ENCODE measurements at regions of chr9 and their contacts with region 1.

Region 1: GRCh38 chr9:94065535-94065961 is 18.7 kb upstream of the PTPDC1 start:
- DNase-seq: peak; percentile 84
- ATAC-seq: peak; percentile 75
- H3K4me3 Mint-ChIP-seq: no peak overlapping the region
- H3K27ac Mint-ChIP-seq: no peak overlapping the region
- H3K4me1 Mint-ChIP-seq: peaks cover 4% of the 10 kb centered on the region
- H3K27me3 Mint-ChIP-seq: no peaks in the 10 kb centered on the region

Region 2: GRCh38 chr9:94002316-94003140 is 63.0 kb before region 1 on chr9:
- CTCF ChIA-PET with region 1: interaction called, 11 read pairs
- POLR2A ChIA-PET with region 1: no interaction called
- intact Hi-C with region 1: no loop called
- DNase-seq: peak; percentile 57
- ATAC-seq: peak; percentile 57
- H3K4me3 Mint-ChIP-seq: no peak overlapping the region
- H3K27ac Mint-ChIP-seq: no peak overlapping the region
- H3K4me1 Mint-ChIP-seq: no peaks in the 10 kb centered on the region
- H3K27me3 Mint-ChIP-seq: peaks cover 6% of the 10 kb centered on the region

Region 3: GRCh38 chr9:94014065-94014654 is 51.4 kb before region 1 on chr9:
- CTCF ChIA-PET with region 1: interaction called, 10 read pairs
- POLR2A ChIA-PET with region 1: no interaction called
- intact Hi-C with region 1: no loop called
- DNase-seq: no peak
- ATAC-seq: no peak
- H3K4me3 Mint-ChIP-seq: no peak overlapping the region
- H3K27ac Mint-ChIP-seq: no peak overlapping the region
- H3K4me1 Mint-ChIP-seq: peaks cover 18% of the 10 kb centered on the region
- H3K27me3 Mint-ChIP-seq: no peaks in the 10 kb centered on the region

Region 4: GRCh38 chr9:94076557-94076956 is 11.0 kb after region 1 on chr9:
- CTCF ChIA-PET with region 1: interaction called, 11 read pairs
- POLR2A ChIA-PET with region 1: no interaction called
- intact Hi-C with region 1: no loop called
- DNase-seq: no peak
- ATAC-seq: no peak
- H3K4me3 Mint-ChIP-seq: no peak overlapping the region
- H3K27ac Mint-ChIP-seq: no peak overlapping the region
- H3K4me1 Mint-ChIP-seq: peaks cover 1% of the 10 kb centered on the region
- H3K27me3 Mint-ChIP-seq: no peaks in the 10 kb centered on the region

Region 5: GRCh38 chr9:94188246-94188645 is 122.7 kb after region 1 on chr9:
- CTCF ChIA-PET with region 1: no interaction called
- POLR2A ChIA-PET with region 1: no interaction called
- intact Hi-C with region 1: no loop called
- DNase-seq: no peak
- ATAC-seq: no peak
- H3K4me3 Mint-ChIP-seq: no peak overlapping the region
- H3K27ac Mint-ChIP-seq: no peak overlapping the region
- H3K4me1 Mint-ChIP-seq: peaks cover 7% of the 10 kb centered on the region
- H3K27me3 Mint-ChIP-seq: no peaks in the 10 kb centered on the region

Region 6: DNA sequence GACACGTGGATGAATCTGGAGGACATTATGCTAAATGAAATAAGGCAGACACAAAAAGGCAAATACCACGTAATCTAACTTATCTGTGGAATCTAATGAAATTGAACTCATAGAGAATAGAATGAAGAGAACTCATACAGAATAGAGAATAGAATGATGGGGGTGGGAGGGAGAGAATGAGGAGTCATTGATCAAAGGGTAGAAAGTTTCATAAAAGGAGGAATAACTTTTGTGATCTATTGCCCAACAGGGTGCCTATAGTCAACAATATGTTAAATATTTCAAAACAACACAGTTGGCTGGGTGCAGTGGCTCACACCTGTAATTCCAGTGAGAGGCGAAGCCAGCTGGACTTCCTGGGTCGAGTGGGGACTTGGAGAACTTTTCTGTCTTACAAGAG is 138.6 kb after region 1 on chr9:
- CTCF ChIA-PET with region 1: interaction called, 175 read pairs
- POLR2A ChIA-PET with region 1: no interaction called
- intact Hi-C with region 1: no loop called
- DNase-seq: no peak
- ATAC-seq: no peak
- H3K4me3 Mint-ChIP-seq: no peak overlapping the region
- H3K27ac Mint-ChIP-seq: no peak overlapping the region
- H3K4me1 Mint-ChIP-seq: no peaks in the 10 kb centered on the region
- H3K27me3 Mint-ChIP-seq: peaks cover 3% of the 10 kb centered on the region